Activated CD4-positive, alpha-beta T cell treated with anti-CD3 and anti-CD28 coated beads for 36 hours (primary cell): ENCODE measurements at regions of chr22 and their contacts with region 1.

Region 1: DNA sequence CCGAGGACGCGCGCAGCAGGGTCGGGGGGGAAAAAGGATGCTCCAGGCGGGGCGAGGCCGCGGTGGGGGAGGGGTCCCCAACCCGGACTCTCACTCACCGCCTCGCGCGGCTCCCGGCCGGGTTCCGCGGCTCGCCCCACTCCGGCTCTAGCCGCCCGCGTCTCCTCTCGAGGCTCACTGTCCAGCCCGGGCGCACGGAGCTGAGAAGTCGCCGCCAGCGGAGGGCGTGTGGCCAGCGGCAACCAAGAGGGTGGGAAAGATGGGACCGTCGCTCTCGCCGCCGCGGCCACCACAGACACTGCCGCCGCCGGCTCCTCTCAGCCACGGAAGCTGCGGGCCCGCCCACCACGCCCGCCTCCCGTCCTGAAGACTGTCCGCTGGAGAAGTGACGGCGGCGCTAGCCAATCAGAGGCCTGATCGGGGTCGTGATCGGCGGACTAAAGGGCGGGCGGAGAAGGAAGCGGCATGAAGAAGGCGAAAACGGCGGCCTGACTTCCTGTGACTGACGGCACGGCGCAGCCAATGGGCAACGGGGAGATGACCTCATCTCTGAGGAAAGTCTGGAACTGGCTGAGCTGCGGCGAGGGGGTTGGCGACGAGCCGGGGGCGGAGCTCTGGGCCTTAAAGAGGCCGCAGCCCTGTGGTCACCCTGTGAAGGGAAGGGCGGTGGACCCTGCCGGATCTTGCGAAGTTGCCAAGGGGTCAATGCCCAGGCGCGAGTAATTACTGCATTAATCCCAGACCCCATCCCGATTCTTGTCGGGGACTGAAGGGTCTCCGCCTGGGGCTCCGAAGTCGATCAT is at the start of gene MRTFA:
- DNase-seq: peak; percentile 100
- ATAC-seq: peak; percentile 96
- H3K4me3 Mint-ChIP-seq: peak within 1 kb of the TSS; percentile 85
- H3K27ac Mint-ChIP-seq: peak within 1 kb of the TSS; percentile 93
- H3K4me1 Mint-ChIP-seq: peaks cover 43% of the 10 kb centered on the region
- H3K27me3 Mint-ChIP-seq: no peaks in the 10 kb centered on the region
- total RNA-seq, gene MRTFA: 41.0 to 43.2 TPM

Region 2: GRCh38 chr22:40463017-40463631 is 173.5 kb before region 1 on chr22:
- CTCF ChIA-PET with region 1: no interaction called
- POLR2A ChIA-PET with region 1: interaction called, 8 read pairs
- intact Hi-C with region 1: loop called in 1 of 2 experiments (anchors 2 kb)
- DNase-seq: peak; percentile 74
- ATAC-seq: peak; percentile 84
- H3K4me3 Mint-ChIP-seq: peak overlapping the region; percentile 87
- H3K27ac Mint-ChIP-seq: peak overlapping the region; percentile 91
- H3K4me1 Mint-ChIP-seq: peaks cover 65% of the 10 kb centered on the region
- H3K27me3 Mint-ChIP-seq: no peaks in the 10 kb centered on the region

Region 3: DNA sequence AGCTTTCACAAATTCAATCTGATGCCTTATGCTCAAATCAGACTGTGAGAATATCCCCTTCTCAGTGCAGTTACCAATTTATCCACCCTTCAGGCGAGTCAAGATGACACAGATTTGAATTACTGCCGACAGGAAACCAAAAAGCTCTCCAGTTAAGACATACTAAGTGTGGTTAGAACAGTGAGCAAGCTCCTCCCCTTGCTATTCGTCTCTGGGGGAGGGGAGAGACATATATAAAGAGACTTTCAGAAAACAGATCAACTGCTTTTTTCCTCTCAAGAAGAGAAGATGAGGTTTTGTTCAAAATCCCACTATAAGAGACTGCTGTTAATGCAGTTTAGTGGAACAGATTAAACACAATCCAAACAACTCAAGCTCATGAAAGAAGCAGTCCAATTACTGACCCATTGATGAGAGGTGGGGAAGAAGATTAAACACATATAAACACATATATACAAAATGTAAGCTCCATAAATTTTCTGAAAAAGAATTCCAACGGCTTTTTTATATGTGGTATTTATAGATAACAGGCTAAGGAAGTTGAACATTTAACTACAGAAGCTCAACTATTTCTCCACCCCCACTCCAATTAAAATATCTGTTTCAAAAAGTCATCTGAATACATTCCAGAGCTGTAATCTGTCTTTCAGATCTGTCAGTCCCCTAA is 102.7 kb before region 1 on chr22:
- CTCF ChIA-PET with region 1: interaction called, 7 read pairs
- POLR2A ChIA-PET with region 1: interaction called, 8 read pairs
- intact Hi-C with region 1: loop called (anchors 2 kb)
- DNase-seq: peak; percentile 66
- ATAC-seq: peak; percentile 88
- H3K4me3 Mint-ChIP-seq: peak overlapping the region; percentile 78
- H3K27ac Mint-ChIP-seq: peak overlapping the region; percentile 92
- H3K4me1 Mint-ChIP-seq: peaks cover 66% of the 10 kb centered on the region
- H3K27me3 Mint-ChIP-seq: no peaks in the 10 kb centered on the region

Region 4: DNA sequence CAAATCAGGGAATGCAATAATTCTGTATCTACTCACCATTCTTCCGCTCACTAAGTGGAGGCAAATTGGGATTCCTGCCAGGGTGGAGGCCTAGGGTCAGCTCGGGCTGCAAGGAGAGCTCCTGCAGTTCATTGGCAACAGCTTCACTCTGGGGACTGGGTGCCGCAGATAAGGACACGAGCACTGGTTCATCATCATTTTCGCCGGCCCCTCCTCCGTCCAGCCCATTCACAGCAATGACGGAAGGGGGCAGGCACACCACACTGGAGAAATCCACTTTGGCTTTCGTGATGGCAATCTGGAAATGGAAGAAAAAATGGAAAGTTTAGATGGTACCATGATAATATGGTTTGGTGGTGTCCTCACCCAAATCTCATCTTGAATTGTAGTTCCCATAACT is 84.5 kb before region 1 on chr22:
- CTCF ChIA-PET with region 1: no interaction called
- POLR2A ChIA-PET with region 1: no interaction called
- intact Hi-C with region 1: no loop called
- DNase-seq: no peak
- ATAC-seq: no peak
- H3K4me3 Mint-ChIP-seq: no peak overlapping the region
- H3K27ac Mint-ChIP-seq: no peak overlapping the region
- H3K4me1 Mint-ChIP-seq: peaks cover 15% of the 10 kb centered on the region
- H3K27me3 Mint-ChIP-seq: no peaks in the 10 kb centered on the region

Region 5: GRCh38 chr22:40597526-40598430 is 38.8 kb before region 1 on chr22:
- CTCF ChIA-PET with region 1: interaction called, 3 read pairs
- POLR2A ChIA-PET with region 1: no interaction called
- intact Hi-C with region 1: loop called in 1 of 2 experiments (anchors 5 kb)
- DNase-seq: no peak
- ATAC-seq: no peak
- H3K4me3 Mint-ChIP-seq: no peak overlapping the region
- H3K27ac Mint-ChIP-seq: no peak overlapping the region
- H3K4me1 Mint-ChIP-seq: peaks cover 54% of the 10 kb centered on the region
- H3K27me3 Mint-ChIP-seq: no peaks in the 10 kb centered on the region

Region 6: GRCh38 chr22:40714192-40714951 is 77.8 kb after region 1 on chr22:
- CTCF ChIA-PET with region 1: no interaction called
- POLR2A ChIA-PET with region 1: no interaction called
- intact Hi-C with region 1: no loop called
- DNase-seq: no peak
- ATAC-seq: no peak
- H3K4me3 Mint-ChIP-seq: no peak overlapping the region
- H3K27ac Mint-ChIP-seq: no peak overlapping the region
- H3K4me1 Mint-ChIP-seq: peaks cover 20% of the 10 kb centered on the region
- H3K27me3 Mint-ChIP-seq: peaks cover 3% of the 10 kb centered on the region

Region 7: GRCh38 chr22:40808018-40808841 is 171.6 kb after region 1 on chr22:
- CTCF ChIA-PET with region 1: no interaction called
- POLR2A ChIA-PET with region 1: no interaction called
- intact Hi-C with region 1: no loop called
- DNase-seq: no peak
- ATAC-seq: no peak
- H3K4me3 Mint-ChIP-seq: no peak overlapping the region
- H3K27ac Mint-ChIP-seq: no peak overlapping the region
- H3K4me1 Mint-ChIP-seq: peaks cover 18% of the 10 kb centered on the region
- H3K27me3 Mint-ChIP-seq: no peaks in the 10 kb centered on the region

Region 8: GRCh38 chr22:41946629-41947423 is 1310.2 kb after region 1 on chr22 and contains the start of gene CENPM:
- CTCF ChIA-PET with region 1: no interaction called
- POLR2A ChIA-PET with region 1: no interaction called
- intact Hi-C with region 1: loop called in 1 of 2 experiments (anchors 5 kb)
- DNase-seq: peak; percentile 98
- ATAC-seq: peak; percentile 95
- H3K4me3 Mint-ChIP-seq: peak within 1 kb of the TSS; percentile 97
- H3K27ac Mint-ChIP-seq: peak within 1 kb of the TSS; percentile 92
- H3K4me1 Mint-ChIP-seq: peaks cover 59% of the 10 kb centered on the region
- H3K27me3 Mint-ChIP-seq: no peaks in the 10 kb centered on the region
- total RNA-seq, gene CENPM: 65.2 to 82.1 TPM